ENCODE measurements at regions of chr16 and their contacts with region 1.

Region 1: DNA sequence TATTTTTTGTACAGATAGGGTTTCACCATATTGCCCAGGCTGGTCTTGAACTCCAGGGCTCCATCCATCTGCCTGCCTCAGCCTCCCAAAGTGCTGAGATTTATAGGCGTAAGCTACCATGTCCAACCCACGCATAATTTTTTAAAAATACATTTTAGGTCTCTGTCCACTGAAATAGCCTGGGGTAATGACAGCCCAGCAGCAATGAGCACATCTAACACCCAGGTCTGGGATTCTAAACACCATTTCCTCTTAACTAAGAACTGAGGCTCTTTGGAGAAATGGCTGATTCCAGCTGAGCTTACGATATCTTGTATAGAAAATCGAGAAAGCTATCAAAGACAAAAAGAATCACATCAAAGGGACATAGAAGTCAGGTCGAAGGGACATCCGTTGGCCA is 245.3 kb downstream of the PARN start:
- DNase-seq: no peak
- H3K4me3 ChIP-seq: no peak overlapping the region
- H3K27ac ChIP-seq: no peak overlapping the region
- H3K4me1 ChIP-seq: no peaks in the 10 kb centered on the region
- H3K27me3 ChIP-seq: no peaks in the 10 kb centered on the region
- CTCF ChIP-seq: no peak
- POLR2A ChIP-seq: no peak

Region 2: DNA sequence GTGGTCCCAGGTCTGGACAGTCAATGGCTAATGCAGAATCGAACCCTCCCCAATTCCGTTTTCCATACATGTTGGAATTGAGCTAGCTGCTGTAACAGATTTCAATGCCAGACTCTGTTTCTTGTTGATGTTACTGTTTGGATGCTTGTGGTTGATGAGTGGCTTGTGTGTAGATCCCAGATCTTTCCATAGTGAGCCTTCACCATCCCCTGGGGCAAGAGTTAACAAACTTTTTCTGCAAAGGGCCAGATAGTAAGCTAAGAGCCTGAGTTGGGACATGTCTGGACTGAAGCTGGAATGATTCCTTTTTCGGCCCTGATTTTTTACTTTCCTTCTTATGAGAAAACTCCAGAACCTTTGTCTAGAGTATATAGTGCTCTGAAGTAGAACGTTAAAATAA is 1877.4 kb before region 1 on chr16:
- intact Hi-C with region 1: no loop called
- DNase-seq: no peak
- H3K4me3 ChIP-seq: no peak overlapping the region
- H3K27ac ChIP-seq: no peak overlapping the region
- H3K4me1 ChIP-seq: no peaks in the 10 kb centered on the region
- H3K27me3 ChIP-seq: no peaks in the 10 kb centered on the region
- CTCF ChIP-seq: no peak
- POLR2A ChIP-seq: no peak

Region 3: DNA sequence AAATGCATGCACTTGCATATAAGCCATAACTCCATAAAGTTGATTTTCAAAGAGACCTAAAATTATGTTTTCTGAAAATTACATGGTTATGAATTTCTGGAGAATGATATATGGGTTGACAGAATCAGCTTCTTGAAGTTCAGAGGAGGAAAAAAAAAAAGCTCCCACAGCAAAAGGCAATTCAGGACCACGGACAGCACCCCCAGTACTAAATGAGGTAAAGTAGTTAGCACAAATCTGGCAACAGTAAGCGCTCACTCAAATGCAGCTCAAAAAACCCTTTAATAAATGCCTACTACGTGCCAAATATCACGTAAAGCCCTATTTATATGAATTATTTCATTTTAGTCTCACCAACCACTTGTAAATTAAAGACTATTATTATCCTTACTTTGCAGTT is 1348.1 kb before region 1 on chr16:
- intact Hi-C with region 1: loop called (anchors 5 kb)
- DNase-seq: no peak
- H3K4me3 ChIP-seq: no peak overlapping the region
- H3K27ac ChIP-seq: no peak overlapping the region
- H3K4me1 ChIP-seq: no peaks in the 10 kb centered on the region
- H3K27me3 ChIP-seq: no peaks in the 10 kb centered on the region
- CTCF ChIP-seq: no peak
- POLR2A ChIP-seq: no peak

Measured in vagina (tissue), 2 donors.